ENCODE measurements at regions of chr18 and their contacts with region 1.

Region 1: DNA sequence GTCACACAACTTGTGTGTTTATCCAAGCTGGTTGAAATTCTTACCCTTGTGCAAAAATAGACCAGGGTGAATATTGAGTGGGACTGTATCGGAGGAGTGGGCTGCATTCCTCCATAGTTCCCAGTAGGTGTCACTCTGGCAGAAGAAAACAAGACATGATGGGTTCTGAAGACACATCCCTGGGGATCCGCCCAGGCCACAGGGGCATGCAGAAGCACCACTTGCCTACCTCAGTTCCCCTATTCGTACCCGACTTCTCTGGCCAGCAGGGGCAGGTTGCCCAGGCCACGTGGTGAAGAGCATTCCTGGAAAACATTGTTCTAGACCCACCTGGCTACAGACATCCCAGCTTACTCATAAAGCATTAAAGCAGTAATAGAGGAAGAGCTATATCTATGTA is 168.2 kb downstream of the FAM210A start:
- DNase-seq: peak; percentile 43
- H3K4me3 Mint-ChIP-seq: no peak overlapping the region
- H3K27ac Mint-ChIP-seq: no peak overlapping the region
- H3K4me1 Mint-ChIP-seq: peaks cover 38% of the 10 kb centered on the region
- H3K27me3 Mint-ChIP-seq: no peaks in the 10 kb centered on the region

Region 2: DNA sequence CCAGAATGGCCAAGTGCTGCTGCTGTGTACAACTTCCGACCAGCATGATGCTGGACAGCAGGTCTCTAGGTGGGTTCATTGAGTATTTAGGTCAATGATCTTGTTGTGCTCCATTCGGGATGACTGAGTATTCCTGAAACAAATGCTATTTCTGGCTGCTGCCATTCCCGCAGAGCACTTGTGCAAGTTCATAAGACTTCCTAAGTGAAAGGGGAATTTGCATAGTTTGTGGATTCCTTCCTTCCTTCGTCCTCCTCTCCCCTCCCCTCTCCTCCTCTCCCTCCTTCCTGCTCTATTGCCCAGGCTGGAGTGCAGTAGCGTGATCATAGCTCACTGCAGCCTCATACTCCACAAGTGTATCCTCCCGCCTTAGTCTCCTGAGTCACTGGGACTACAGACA is 299.2 kb before region 1 on chr18:
- CTCF ChIA-PET with region 1: no interaction called
- POLR2A ChIA-PET with region 1: no interaction called
- intact Hi-C with region 1: no loop called
- DNase-seq: peak; percentile 3
- H3K4me3 Mint-ChIP-seq: no peak overlapping the region
- H3K27ac Mint-ChIP-seq: no peak overlapping the region
- H3K4me1 Mint-ChIP-seq: peaks cover 24% of the 10 kb centered on the region
- H3K27me3 Mint-ChIP-seq: peaks cover 2% of the 10 kb centered on the region

Region 3: GRCh38 chr18:13577091-13577697 is 19.1 kb after region 1 on chr18:
- CTCF ChIA-PET with region 1: interaction called, 16 read pairs
- POLR2A ChIA-PET with region 1: interaction called, 5 read pairs
- intact Hi-C with region 1: loop called (anchors 1 kb)
- DNase-seq: peak; percentile 70
- H3K4me3 Mint-ChIP-seq: peak overlapping the region; percentile 31
- H3K27ac Mint-ChIP-seq: peak overlapping the region; percentile 52
- H3K4me1 Mint-ChIP-seq: peaks cover 45% of the 10 kb centered on the region
- H3K27me3 Mint-ChIP-seq: no peaks in the 10 kb centered on the region

Region 4: DNA sequence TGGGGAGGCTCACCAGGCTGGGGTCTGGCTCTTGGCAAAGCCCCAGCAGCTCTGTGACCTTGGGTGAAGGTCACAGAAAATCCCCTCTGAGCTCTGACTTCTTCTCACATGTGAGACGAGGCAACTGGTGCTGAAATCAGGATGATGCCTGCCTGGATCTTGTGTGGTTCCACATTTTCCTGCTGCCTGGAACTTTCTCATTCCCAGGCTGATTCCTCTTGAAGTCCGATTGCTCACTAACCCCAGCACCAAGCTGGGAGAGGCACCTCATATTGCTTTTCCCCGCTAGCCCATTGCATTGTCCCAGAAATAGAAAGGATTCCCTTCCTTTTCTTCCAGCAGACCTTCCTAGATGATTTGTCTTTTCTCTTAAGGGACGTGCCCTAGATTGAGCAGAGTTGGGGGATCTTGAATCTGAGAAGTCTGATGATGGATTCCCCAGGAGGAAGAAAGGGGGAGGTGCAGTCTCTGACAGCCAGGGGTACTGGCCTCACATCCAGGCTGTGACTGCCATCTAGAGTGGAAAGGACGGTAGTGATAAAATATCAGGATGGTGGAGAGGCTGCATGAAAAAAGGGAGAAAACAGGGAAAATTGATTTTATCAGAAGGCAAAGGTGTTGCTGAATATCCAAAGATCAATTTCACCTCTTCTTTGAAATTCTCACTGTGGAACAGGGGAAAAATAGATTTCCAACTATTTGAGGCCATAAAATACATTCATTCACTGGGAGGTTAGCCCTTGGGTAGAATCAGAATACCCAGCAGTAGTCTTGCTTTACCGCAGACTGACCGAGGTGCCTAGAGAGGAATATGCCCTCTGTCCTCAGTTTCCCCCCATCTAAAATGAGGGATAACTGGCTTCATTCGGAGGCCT is 72.0 kb after region 1 on chr18:
- CTCF ChIA-PET with region 1: interaction called, 55 read pairs
- POLR2A ChIA-PET with region 1: no interaction called
- intact Hi-C with region 1: loop called (anchors 1 kb)
- DNase-seq: peak; percentile 63
- H3K4me3 Mint-ChIP-seq: no peak overlapping the region
- H3K27ac Mint-ChIP-seq: no peak overlapping the region
- H3K4me1 Mint-ChIP-seq: peaks cover 9% of the 10 kb centered on the region
- H3K27me3 Mint-ChIP-seq: no peaks in the 10 kb centered on the region

Region 5: DNA sequence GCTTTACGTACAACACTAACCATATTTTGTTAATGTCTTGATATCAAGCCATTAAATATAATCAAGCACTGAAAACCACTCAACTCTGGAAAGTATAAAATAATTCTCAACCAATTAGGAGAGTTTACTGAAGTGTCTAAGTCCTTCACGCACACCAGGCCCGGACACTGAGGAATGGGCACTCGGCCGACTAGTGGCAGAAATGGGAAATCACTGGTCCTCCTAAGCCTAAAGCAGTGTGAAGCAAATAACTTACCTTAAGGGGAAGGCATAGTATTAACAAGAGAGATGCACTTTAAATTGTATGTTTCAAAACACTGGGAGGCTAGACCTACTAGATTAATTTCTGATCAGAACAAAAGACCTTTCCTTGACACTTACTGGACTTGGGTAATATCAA is 122.5 kb after region 1 on chr18:
- CTCF ChIA-PET with region 1: no interaction called
- POLR2A ChIA-PET with region 1: no interaction called
- intact Hi-C with region 1: no loop called
- DNase-seq: peak; percentile 24
- H3K4me3 Mint-ChIP-seq: no peak overlapping the region
- H3K27ac Mint-ChIP-seq: no peak overlapping the region
- H3K4me1 Mint-ChIP-seq: peaks cover 11% of the 10 kb centered on the region
- H3K27me3 Mint-ChIP-seq: no peaks in the 10 kb centered on the region

Region 6: GRCh38 chr18:13800505-13801259 is 242.6 kb after region 1 on chr18:
- CTCF ChIA-PET with region 1: interaction called, 3 read pairs
- POLR2A ChIA-PET with region 1: no interaction called
- intact Hi-C with region 1: loop called (anchors 2 kb)
- DNase-seq: peak; percentile 76
- H3K4me3 Mint-ChIP-seq: peak overlapping the region; percentile 1
- H3K27ac Mint-ChIP-seq: no peak overlapping the region
- H3K4me1 Mint-ChIP-seq: peaks cover 4% of the 10 kb centered on the region
- H3K27me3 Mint-ChIP-seq: peaks cover 58% of the 10 kb centered on the region

Measured in activated CD4-positive, alpha-beta memory T cell treated with anti-CD3 and anti-CD28 coated beads for 36 hours (primary cell).